A673 (cell line): ENCODE measurements at regions of chr4 and their contacts with region 1.

Region 1: GRCh38 chr4:153344131-153345010 is at the start of gene MND1:
- DNase-seq: peak; percentile 96
- H3K4me3 ChIP-seq: peak within 1 kb of the TSS; percentile 80
- H3K27ac ChIP-seq: peak within 1 kb of the TSS; percentile 96
- H3K4me1 ChIP-seq: peaks cover 42% of the 10 kb centered on the region
- H3K27me3 ChIP-seq: no peaks in the 10 kb centered on the region
- CTCF ChIP-seq: peak; percentile 79
- total RNA-seq, gene MND1: 43.7 and 46.8 TPM in 2 replicates

Region 2: DNA sequence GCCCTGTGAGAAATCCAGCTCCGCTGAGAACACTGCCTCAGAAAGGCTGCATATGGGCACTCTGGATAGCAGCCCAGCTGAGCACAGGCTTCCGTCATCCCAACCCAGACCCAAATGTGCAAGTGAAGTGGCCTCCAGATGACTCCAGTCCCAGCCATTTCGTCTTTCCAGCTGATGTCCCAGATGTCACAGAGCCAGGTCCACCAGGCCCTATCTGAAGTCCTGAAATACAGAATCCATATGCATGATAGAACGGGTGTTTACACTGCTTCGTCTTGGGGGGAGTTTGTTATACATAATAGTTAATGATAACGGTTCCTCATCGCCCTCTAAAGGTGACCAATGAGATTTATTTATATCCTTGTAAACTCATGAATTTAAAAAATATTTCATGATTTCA is 212.8 kb before region 1 on chr4:
- CTCF ChIA-PET with region 1: no interaction called
- POLR2A ChIA-PET with region 1: no interaction called
- intact Hi-C with region 1: no loop called
- DNase-seq: peak; percentile 39
- H3K4me3 ChIP-seq: no peak overlapping the region
- H3K27ac ChIP-seq: no peak overlapping the region
- H3K4me1 ChIP-seq: no peaks in the 10 kb centered on the region
- H3K27me3 ChIP-seq: no peaks in the 10 kb centered on the region
- CTCF ChIP-seq: peak; percentile 43; the same call in 1 of the 2 replicates

Region 3: GRCh38 chr4:153418558-153418957 is 74.2 kb after region 1 on chr4:
- CTCF ChIA-PET with region 1: no interaction called
- POLR2A ChIA-PET with region 1: no interaction called
- intact Hi-C with region 1: loop called (anchors 5 kb)
- DNase-seq: peak; percentile 52
- H3K4me3 ChIP-seq: no peak overlapping the region
- H3K27ac ChIP-seq: peak overlapping the region; percentile 14
- H3K4me1 ChIP-seq: peaks cover 8% of the 10 kb centered on the region
- H3K27me3 ChIP-seq: no peaks in the 10 kb centered on the region
- CTCF ChIP-seq: no peak

Region 4: GRCh38 chr4:153466081-153466948 is 121.9 kb after region 1 on chr4 and contains the start of gene TMEM131L:
- CTCF ChIA-PET with region 1: interaction called, 3 read pairs
- POLR2A ChIA-PET with region 1: no interaction called
- intact Hi-C with region 1: loop called (anchors 2 kb)
- DNase-seq: peak; percentile 85
- H3K4me3 ChIP-seq: peak within 1 kb of the TSS; percentile 91
- H3K27ac ChIP-seq: peak within 1 kb of the TSS; percentile 90
- H3K4me1 ChIP-seq: peaks cover 34% of the 10 kb centered on the region
- H3K27me3 ChIP-seq: no peaks in the 10 kb centered on the region
- CTCF ChIP-seq: no peak
- total RNA-seq, gene TMEM131L: 17.0 and 18.4 TPM in 2 replicates

Region 5: DNA sequence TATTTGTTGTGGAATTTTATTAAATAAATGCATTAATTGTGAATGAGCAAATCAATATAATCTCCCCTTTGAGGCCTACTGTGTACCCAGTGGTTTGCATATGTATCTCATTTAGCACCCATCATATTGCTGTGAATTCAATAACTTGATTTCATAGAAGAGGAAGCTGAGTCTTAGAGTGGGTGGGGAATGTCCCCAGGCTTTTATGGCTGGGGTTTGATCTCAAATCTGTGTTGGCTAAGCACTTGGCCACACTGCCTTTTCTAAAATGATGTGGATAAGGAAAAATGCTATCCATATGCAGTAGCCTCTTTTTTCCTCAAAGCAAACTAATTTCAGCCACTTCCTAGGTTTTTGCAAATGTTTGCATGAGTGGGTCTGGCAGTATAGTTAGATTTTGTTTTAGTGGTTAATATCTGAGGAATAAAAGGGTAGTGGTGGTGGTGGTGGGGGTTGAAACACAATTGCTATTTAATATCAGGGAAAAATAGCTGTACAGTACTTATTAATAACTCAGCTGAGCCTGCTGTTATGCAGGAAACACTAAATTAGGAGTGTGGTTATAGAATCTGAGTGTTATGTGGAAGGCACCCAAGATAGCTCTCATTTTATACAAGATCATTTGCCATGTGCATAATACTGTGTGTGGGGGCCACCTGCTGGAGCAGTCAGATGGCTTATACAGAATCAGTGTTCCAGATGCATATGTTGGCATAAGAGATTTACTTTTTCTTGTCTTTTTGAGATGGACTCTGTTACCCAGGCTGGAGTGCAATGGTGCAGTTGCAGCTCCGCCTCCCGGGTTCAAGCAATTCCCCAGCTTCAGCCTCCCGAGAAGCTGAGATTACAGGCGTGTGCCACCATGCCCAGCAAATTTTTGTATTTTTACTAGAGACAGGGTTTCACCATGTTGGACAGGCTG is 229.8 kb after region 1 on chr4:
- CTCF ChIA-PET with region 1: interaction called, 25 read pairs
- POLR2A ChIA-PET with region 1: no interaction called
- intact Hi-C with region 1: loop called (anchors 1 kb)
- DNase-seq: peak; percentile 85
- H3K4me3 ChIP-seq: no peak overlapping the region
- H3K27ac ChIP-seq: no peak overlapping the region
- H3K4me1 ChIP-seq: peaks cover 18% of the 10 kb centered on the region
- H3K27me3 ChIP-seq: no peaks in the 10 kb centered on the region
- CTCF ChIP-seq: peak; percentile 81

Region 6: DNA sequence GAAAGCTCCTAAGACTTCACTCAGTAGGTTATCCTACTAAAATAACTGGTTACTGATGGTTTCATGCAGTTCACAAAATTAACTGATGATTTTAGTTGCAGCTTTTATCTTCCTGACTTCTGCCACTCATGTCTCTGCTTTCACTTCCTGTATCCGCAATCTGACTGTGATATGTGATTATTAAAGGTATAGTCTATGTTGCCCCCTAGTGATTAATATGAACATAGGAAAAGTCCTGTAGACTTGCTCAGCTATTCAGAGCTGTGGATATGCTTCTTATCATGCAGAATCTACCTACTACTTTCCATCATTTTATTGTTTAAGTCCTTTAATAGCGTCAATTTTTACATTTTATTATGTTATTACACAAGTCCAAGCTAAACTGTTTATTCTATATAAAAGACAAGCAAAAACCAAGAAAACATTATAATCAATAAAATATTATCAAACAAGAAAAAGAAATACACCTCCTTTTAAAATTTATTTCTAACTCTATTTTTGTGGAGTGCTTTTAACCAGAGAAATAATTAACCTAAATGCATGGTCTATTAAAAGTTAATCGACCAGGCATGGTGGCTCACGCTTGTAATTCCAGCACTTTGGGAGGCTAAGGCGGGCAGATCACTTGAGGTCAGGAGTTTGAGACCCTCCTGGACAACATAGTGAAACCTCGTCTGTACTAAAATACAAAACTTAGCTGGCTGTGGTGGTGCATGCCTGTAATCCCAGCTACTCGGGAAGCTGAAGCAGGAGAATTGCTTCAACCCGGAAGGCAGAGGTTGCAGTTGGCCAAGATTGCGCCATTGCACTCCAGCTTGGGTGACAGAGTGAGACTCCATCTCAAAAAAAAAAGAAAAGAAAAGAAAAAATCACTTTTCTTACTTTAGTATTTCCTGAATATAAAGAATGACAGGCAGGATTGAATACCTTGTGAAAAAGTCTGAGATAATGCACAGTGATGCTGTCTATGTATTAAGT is 299.3 kb after region 1 on chr4:
- CTCF ChIA-PET with region 1: no interaction called
- POLR2A ChIA-PET with region 1: no interaction called
- intact Hi-C with region 1: loop called (anchors 2 kb)
- DNase-seq: peak; percentile 80
- H3K4me3 ChIP-seq: no peak overlapping the region
- H3K27ac ChIP-seq: no peak overlapping the region
- H3K4me1 ChIP-seq: no peaks in the 10 kb centered on the region
- H3K27me3 ChIP-seq: no peaks in the 10 kb centered on the region
- CTCF ChIP-seq: peak; percentile 70

Region 7: DNA sequence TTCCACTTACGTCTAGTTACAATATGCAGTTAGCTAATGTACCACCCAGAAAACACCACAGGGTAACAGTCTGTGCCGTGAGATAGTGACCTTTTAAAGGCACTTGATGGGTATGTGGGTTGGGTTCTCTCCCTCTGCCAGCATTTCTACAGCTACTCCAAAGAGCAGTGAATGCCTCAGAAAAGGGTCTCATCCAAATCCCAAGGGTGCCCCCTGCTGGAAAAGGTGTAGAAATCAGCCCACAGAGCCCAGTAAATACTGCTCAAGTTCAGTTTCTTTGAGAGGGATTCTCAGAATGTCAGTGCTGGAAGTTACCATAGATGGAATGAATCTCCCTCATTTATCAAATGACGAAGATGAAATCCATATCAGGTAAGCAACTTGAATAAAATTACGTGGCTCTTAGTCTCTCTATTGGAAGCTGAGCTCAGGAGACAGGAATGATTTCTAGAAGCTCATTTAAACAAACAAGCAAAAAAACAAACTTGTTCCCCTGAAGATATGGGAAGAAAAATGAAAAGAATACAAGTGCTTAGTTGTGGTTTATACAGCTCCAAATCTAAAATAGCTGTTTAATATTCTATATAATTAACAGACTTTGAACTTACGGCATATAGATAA is 405.9 kb after region 1 on chr4:
- CTCF ChIA-PET with region 1: no interaction called
- POLR2A ChIA-PET with region 1: no interaction called
- intact Hi-C with region 1: loop called (anchors 5 kb)
- DNase-seq: peak; percentile 90
- H3K4me3 ChIP-seq: no peak overlapping the region
- H3K27ac ChIP-seq: no peak overlapping the region
- H3K4me1 ChIP-seq: no peaks in the 10 kb centered on the region
- H3K27me3 ChIP-seq: no peaks in the 10 kb centered on the region
- CTCF ChIP-seq: peak; percentile 89